ENCODE measurements at regions of chr6 and their contacts with region 1.

Region 1: GRCh38 chr6:89859744-89860143 is 30.1 kb downstream of the CASP8AP2 start:
- DNase-seq: no peak
- H3K4me3 ChIP-seq: no peak overlapping the region
- H3K27ac ChIP-seq: no peak overlapping the region
- H3K4me1 ChIP-seq: no peaks in the 10 kb centered on the region
- H3K27me3 ChIP-seq: no peaks in the 10 kb centered on the region
- CTCF ChIP-seq: no peak
- POLR2A ChIP-seq: no peak

Region 2: DNA sequence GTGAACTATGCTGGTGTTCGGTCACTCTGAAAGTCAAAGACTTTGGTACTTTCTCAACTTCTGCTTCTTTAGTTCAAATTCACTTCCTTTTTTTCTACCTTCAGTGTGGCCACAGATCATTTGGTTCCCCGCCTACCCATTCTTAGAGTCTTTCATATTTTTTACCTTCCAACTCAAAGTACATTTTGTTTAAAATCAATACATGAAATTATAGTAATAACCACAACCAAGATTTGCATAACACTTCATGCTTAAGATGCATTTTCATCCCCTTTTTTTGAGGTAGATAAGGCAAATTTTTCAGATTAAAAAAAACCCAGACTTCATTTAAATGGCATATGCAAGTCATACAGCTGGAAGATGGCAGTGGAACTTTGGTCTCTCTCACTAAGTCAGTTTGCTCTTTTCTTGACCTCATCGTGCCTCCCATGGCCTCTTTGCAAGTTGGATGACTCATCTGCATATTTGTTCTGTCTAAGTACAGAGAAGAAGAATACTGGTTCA is 1681.7 kb before region 1 on chr6:
- intact Hi-C with region 1: loop called (anchors 10 kb)
- DNase-seq: no peak
- H3K4me3 ChIP-seq: no peak overlapping the region
- H3K27ac ChIP-seq: no peak overlapping the region
- H3K4me1 ChIP-seq: no peaks in the 10 kb centered on the region
- H3K27me3 ChIP-seq: no peaks in the 10 kb centered on the region
- CTCF ChIP-seq: no peak
- POLR2A ChIP-seq: no peak

Region 3: GRCh38 chr6:89829591-89830385 is 30.0 kb before region 1 on chr6 and contains the start of gene CASP8AP2:
- intact Hi-C with region 1: no loop called
- DNase-seq: peak; percentile 95
- H3K4me3 ChIP-seq: peak within 1 kb of the TSS; percentile 78 to 89 (median 88)
- H3K27ac ChIP-seq: peak within 1 kb of the TSS; percentile 87 to 88
- H3K4me1 ChIP-seq: no peaks in the 10 kb centered on the region
- H3K27me3 ChIP-seq: no peaks in the 10 kb centered on the region
- CTCF ChIP-seq: no peak
- POLR2A ChIP-seq: peak; percentile 33
- total RNA-seq, gene CASP8AP2: 16.0 to 24.9 (median 17.7) TPM

Measured in breast epithelium (tissue), 4 donors.